ENCODE measurements at regions of chr12 and their contacts with region 1.

Region 1: DNA sequence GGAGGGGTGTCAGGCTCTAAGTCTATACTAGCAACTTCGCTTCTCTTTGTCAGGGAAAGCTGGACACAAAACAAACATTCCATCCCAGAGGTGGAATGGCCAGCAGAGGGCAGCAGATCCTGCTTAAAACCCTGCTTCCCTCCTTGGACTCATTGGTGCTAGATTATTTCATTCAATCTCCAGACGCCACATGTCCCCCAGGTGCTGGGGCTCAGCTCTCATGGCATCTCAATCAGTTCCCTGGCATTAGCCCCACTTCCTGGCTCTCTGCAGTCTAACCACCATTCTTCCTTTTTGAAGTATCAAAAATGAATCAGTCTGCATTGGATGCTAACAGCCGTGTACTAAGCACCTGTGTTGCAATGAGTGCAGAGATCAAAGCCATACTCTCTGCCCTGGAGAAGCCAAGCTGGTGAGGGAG is 8.1 kb upstream of the PPP1R1A start:
- DNase-seq: peak; percentile 50 to 88
- H3K4me3 ChIP-seq: no peak overlapping the region
- H3K27ac ChIP-seq: no peak overlapping the region
- H3K4me1 ChIP-seq: 0 out of 7 replicates have a peak, but pooled peaks cover 0 to 2% (median 0%) of the 10 kb centered on the region in 4 experiments
- H3K27me3 ChIP-seq: peaks cover 0 to 19% (median 13%) of the 10 kb centered on the region in 4 experiments; a peak in 3 of 7 replicates
- CTCF ChIP-seq: peak; percentile 75 to 97 (median 84)
- EP300 ChIP-seq: no peak
- POLR2A ChIP-seq: no peak
- RAD21 ChIP-seq: peak; percentile 72 to 77

Region 2: DNA sequence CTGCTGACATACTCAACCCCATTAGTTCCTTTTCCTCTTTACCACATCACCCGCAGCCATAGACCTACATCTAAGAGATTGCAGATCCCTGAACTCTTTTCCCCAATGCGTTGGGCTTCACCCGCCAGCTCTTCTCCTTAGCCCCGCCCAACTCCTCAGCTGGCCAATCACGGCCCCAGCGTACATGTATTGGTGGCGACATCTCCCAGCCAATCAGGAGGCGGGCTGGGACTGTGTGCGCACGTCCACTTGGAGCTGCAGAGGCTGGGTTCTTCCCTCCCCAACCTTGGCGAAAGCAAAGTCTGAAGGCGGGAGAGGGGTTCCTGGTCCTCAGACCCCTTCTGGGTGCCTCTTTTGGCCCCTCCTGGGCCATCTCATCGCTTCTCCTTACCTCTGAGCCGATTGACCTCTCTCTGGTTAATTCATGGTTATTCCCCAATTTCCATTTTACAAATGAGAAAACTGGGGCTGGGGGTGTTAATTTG is 36.1 kb before region 1 on chr12:
- CTCF ChIA-PET with region 1: interaction called, 13 read pairs
- POLR2A ChIA-PET with region 1: interaction called, 4 read pairs
- DNase-seq: peak; percentile 61 to 88
- H3K4me3 ChIP-seq: peak overlapping the region; percentile 19 to 57 (median 26); a peak in 7 of 8 replicates
- H3K27ac ChIP-seq: no peak overlapping the region
- H3K4me1 ChIP-seq: peaks cover 0 to 7% (median 5%) of the 10 kb centered on the region in 4 experiments; a peak in 5 of 7 replicates
- H3K27me3 ChIP-seq: peaks cover 19 to 69% (median 54%) of the 10 kb centered on the region in 4 experiments
- CTCF ChIP-seq: no peak
- EP300 ChIP-seq: no peak
- POLR2A ChIP-seq: 0 out of 3 replicates have a peak, but pooled peaks of 1 of the 2 experiments have one; percentile 12
- RAD21 ChIP-seq: no peak

Region 3: DNA sequence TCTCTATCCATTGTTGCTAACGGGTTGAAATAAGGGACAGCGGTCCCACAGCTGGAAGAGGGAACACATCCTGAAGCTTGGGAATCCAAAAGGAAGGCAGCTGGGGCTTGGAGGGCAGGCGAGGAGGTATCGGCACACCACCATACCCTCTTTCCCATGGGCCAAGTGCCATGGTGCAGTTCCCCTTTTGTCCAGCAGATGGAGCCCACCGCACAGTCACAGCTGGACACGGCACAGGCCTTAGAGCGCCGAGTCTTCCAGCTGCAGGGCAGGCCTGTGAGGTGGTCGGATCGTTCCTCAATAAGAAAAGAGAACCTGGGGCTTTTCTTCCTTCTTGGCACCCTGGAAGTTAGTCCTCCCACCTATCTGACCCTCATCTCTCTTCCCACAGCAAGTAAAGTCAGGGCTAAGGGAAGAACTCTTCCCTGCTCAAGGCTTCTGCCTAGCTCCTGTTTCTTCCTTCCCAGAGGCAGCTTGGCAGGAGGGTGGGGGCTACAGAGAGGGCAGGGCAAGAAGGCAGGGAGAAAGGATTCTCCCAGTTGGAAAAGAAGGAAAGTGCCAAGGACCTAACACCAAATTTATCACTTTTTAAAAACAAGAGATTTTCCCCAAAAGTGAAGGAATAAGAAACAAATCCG is 16.7 kb before region 1 on chr12:
- CTCF ChIA-PET with region 1: interaction called, 99 read pairs
- POLR2A ChIA-PET with region 1: interaction called, 3 read pairs
- DNase-seq: peak; percentile 67 to 99
- H3K4me3 ChIP-seq: no peak overlapping the region
- H3K27ac ChIP-seq: no peak overlapping the region
- H3K4me1 ChIP-seq: peaks cover 0 to 10% (median 3%) of the 10 kb centered on the region in 4 experiments; a peak in 5 of 7 replicates
- H3K27me3 ChIP-seq: no peaks in the 10 kb centered on the region; a peak in 1 of 7 replicates
- CTCF ChIP-seq: peak; percentile 94 to 100 (median 100)
- EP300 ChIP-seq: no peak
- POLR2A ChIP-seq: no peak
- RAD21 ChIP-seq: peak; percentile 86 to 90

Region 4: GRCh38 chr12:54658306-54659264 is 62.0 kb after region 1 on chr12:
- CTCF ChIA-PET with region 1: interaction called, 18 read pairs
- POLR2A ChIA-PET with region 1: interaction called, 3 read pairs
- DNase-seq: peak; percentile 53 to 87
- H3K4me3 ChIP-seq: peak overlapping the region in 1 of 4 experiments; percentile 7; a peak in 1 of 8 replicates
- H3K27ac ChIP-seq: no peak overlapping the region
- H3K4me1 ChIP-seq: peaks cover 0 to 6% (median 1%) of the 10 kb centered on the region in 4 experiments; a peak in 5 of 7 replicates
- H3K27me3 ChIP-seq: peaks cover 0 to 2% (median 0%) of the 10 kb centered on the region in 4 experiments; a peak in 3 of 7 replicates
- CTCF ChIP-seq: peak; percentile 76 to 95 (median 88)
- EP300 ChIP-seq: no peak
- POLR2A ChIP-seq: no peak
- RAD21 ChIP-seq: peak; percentile 76 to 84

Region 5: GRCh38 chr12:54958048-54958658 is 361.6 kb after region 1 on chr12:
- CTCF ChIA-PET with region 1: interaction called, 13 read pairs
- POLR2A ChIA-PET with region 1: no interaction called
- DNase-seq: no peak
- H3K4me3 ChIP-seq: no peak overlapping the region
- H3K27ac ChIP-seq: no peak overlapping the region
- H3K4me1 ChIP-seq: peaks cover 0 to 5% (median 0%) of the 10 kb centered on the region in 4 experiments; a peak in 2 of 7 replicates
- H3K27me3 ChIP-seq: no peaks in the 10 kb centered on the region
- CTCF ChIP-seq: peak in 2 of 3 experiments; percentile 61 to 70; a peak in 2 of 4 replicates
- EP300 ChIP-seq: no peak
- POLR2A ChIP-seq: no peak
- RAD21 ChIP-seq: peak; percentile 94 to 97